Activated B cell treated with CpG ODN at 0.5 μM for 24 hours (primary cell): ENCODE measurements at regions of chr6 and their contacts with region 1.

Region 1: DNA sequence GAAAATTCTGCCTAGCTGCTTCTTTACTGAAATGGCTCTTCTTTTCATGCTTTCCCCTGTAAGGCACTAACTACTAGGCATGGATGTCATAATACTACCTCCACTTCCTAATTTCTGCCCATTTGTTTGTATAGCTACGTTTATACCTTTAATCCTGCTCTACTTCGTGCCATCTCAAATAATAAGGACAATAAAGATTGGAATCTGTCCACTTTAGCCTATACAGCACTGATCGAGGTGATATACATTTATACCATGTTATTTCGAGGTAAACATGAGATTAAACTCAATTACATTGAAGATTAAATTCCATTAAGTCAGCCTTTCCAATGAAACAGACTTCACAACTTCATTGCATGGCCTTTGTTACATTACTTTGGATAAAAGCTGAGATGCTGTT is 390.6 kb upstream of the MARCKS start:
- DNase-seq: no peak
- ATAC-seq: no peak
- H3K4me3 Mint-ChIP-seq: no peak overlapping the region
- H3K27ac Mint-ChIP-seq: no peak overlapping the region
- H3K4me1 Mint-ChIP-seq: peaks cover 5% of the 10 kb centered on the region
- H3K27me3 Mint-ChIP-seq: no peaks in the 10 kb centered on the region
- CTCF ChIP-seq: no peak

Region 2: GRCh38 chr6:113447088-113447831 is 19.3 kb before region 1 on chr6:
- CTCF ChIA-PET with region 1: interaction called, 4 read pairs
- POLR2A ChIA-PET with region 1: no interaction called
- intact Hi-C with region 1: loop called (anchors 2 kb)
- DNase-seq: no peak
- ATAC-seq: peak; percentile 31
- H3K4me3 Mint-ChIP-seq: no peak overlapping the region
- H3K27ac Mint-ChIP-seq: no peak overlapping the region
- H3K4me1 Mint-ChIP-seq: peaks cover 24% of the 10 kb centered on the region
- H3K27me3 Mint-ChIP-seq: no peaks in the 10 kb centered on the region
- CTCF ChIP-seq: no peak